ENCODE measurements at regions of chr16 and their contacts with region 1.

Region 1: DNA sequence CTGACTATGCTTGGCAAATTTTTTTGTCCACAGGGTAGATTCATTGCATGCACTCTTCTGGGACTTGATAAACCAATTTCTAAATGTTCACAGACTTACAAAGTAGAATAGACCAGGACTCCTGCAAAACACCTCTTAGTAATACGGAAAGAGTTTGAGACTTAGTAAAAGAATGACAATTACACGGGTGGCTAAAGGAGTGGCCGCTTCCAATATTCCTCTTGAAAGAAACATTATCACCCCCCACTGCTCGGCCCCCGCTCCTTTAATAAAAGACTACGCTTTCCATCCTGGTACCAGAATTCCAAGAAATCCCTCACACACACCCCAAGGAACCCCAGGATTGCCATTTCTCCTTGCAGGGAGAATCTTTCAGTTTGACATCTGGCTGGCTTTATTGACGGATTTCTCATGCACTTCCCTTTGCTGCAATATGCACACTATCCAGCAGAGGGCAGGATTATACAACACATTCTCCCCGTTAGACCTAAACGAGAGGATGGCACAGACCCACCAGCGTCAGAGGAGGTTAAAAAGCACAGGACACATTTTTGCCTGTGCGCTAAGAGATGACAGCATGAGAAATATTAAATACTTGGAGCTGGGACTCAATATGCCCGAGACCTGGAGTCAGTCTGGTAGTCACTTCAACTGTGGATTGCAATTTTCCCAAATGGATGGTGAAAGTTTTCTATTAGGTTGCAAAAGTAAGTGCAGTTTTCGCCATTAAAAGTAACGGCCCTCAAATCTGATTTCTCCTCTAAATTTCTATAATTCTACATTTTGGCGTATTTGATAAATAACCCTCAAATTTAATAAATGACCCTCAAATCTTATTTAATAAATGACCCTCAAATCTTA is 46.6 kb upstream of the NUDT7 start:
- DNase-seq: peak in 7 of 10 donors; percentile 44 to 84 (median 58)
- H3K4me3 ChIP-seq: peak overlapping the region in 2 of 59 donors; percentile 2 to 27
- H3K27ac ChIP-seq: no peak overlapping the region
- H3K27me3 ChIP-seq: peaks cover 0 to 17% (median 0%) of the 10 kb centered on the region in 45 donors
- CTCF ChIP-seq: peak; percentile 78 to 98 (median 93)

Region 2: GRCh38 chr16:77238593-77238992 is 437.1 kb before region 1 on chr16:
- intact Hi-C with region 1: no loop called
- DNase-seq: peak in 1 of 10 donors; percentile 73
- H3K4me3 ChIP-seq: no peak overlapping the region
- H3K27ac ChIP-seq: no peak overlapping the region
- H3K27me3 ChIP-seq: peaks cover 0 to 9% (median 0%) of the 10 kb centered on the region in 45 donors
- CTCF ChIP-seq: no peak

Region 3: GRCh38 chr16:77744141-77744540 is 68.4 kb after region 1 on chr16:
- intact Hi-C with region 1: no loop called
- DNase-seq: no peak
- H3K4me3 ChIP-seq: no peak overlapping the region
- H3K27ac ChIP-seq: no peak overlapping the region
- H3K27me3 ChIP-seq: no peaks in the 10 kb centered on the region
- CTCF ChIP-seq: no peak

Region 4: GRCh38 chr16:77759821-77760220 is 84.1 kb after region 1 on chr16:
- intact Hi-C with region 1: no loop called
- DNase-seq: no peak
- H3K4me3 ChIP-seq: no peak overlapping the region
- H3K27ac ChIP-seq: no peak overlapping the region
- H3K27me3 ChIP-seq: peaks cover 0 to 5% (median 0%) of the 10 kb centered on the region in 45 donors
- CTCF ChIP-seq: no peak

Region 5: GRCh38 chr16:77971306-77972271 is 295.9 kb after region 1 on chr16:
- intact Hi-C with region 1: loop called (anchors 1 to 2 kb)
- DNase-seq: peak; percentile 66 to 89 (median 82)
- H3K4me3 ChIP-seq: no peak overlapping the region
- H3K27ac ChIP-seq: no peak overlapping the region
- H3K27me3 ChIP-seq: peaks cover 0 to 16% (median 0%) of the 10 kb centered on the region in 45 donors
- CTCF ChIP-seq: peak; percentile 63 to 94 (median 88)

Region 6: GRCh38 chr16:78002915-78003538 is 327.3 kb after region 1 on chr16:
- intact Hi-C with region 1: loop called in 1 of 2 experiments (anchors 5 kb)
- DNase-seq: peak; percentile 47 to 84 (median 79)
- H3K4me3 ChIP-seq: peak overlapping the region in 1 of 59 donors; percentile 4
- H3K27ac ChIP-seq: no peak overlapping the region
- H3K27me3 ChIP-seq: peaks cover 0 to 3% (median 0%) of the 10 kb centered on the region in 45 donors
- CTCF ChIP-seq: peak; percentile 64 to 96 (median 84)

Region 7: DNA sequence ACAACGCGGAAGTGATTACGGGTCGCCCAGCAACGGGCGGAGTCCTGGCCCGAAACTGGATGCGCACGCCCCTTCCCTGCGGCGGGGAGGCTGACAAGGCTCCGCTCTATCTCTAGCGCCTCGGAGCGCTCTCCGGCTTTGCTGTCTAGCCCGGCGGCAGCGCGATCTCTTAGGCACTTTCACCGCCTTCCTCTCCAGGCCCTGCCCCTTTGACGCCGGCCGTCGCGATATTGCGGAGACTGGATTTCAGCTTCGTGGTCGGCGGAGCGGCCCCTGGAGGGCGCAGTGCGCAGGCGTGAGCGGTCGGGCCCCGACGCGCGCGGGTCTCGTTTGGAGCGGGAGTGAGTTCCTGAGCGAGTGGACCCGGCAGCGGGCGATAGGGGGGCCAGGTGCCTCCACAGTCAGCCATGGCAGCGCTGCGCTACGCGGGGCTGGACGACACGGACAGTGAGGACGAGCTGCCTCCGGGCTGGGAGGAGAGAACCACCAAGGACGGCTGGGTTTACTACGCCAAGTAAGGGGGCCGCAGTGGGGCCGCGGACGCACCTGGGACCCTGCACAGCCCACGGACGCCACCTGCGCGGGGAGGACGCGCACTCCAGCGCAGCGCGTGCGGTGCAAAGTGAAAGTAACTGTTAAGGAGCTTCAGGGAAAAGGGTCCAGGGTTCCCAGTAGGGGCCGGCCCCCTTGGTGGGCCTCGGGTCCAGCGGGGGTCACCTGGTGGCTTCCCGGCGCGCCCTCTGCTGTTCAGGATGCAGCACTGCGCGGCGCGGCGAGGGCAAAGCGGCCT is 423.9 kb after region 1 on chr16 and contains the start of gene WWOX:
- intact Hi-C with region 1: loop called in 1 of 2 experiments (anchors 10 kb)
- DNase-seq: peak; percentile 89 to 97 (median 95)
- H3K4me3 ChIP-seq: peak within 1 kb of the TSS; percentile 64 to 100 (median 96)
- H3K27ac ChIP-seq: peak within 1 kb of the TSS; percentile 37 to 98 (median 91)
- H3K27me3 ChIP-seq: no peaks in the 10 kb centered on the region
- CTCF ChIP-seq: peak; percentile 55 to 90 (median 78)
- total RNA-seq, gene WWOX: 20.9 to 71.9 (median 41.3) TPM

Measured in dorsolateral prefrontal cortex (tissue), 120 donors.